ENCODE measurements at regions of chr7 and their contacts with region 1.

Region 1: GRCh38 chr7:105336009-105336408 is 52.7 kb downstream of the SRPK2 start:
- DNase-seq: no peak
- ATAC-seq: no peak
- H3K4me3 Mint-ChIP-seq: no peak overlapping the region
- H3K27ac Mint-ChIP-seq: no peak overlapping the region
- H3K4me1 Mint-ChIP-seq: peaks cover 28% of the 10 kb centered on the region
- H3K27me3 Mint-ChIP-seq: no peaks in the 10 kb centered on the region
- CTCF ChIP-seq: no peak

Region 2: GRCh38 chr7:105141068-105141467 is 194.9 kb before region 1 on chr7:
- CTCF ChIA-PET with region 1: interaction called, 4 read pairs
- POLR2A ChIA-PET with region 1: no interaction called
- intact Hi-C with region 1: loop called (anchors 5 kb)
- DNase-seq: no peak
- ATAC-seq: no peak
- H3K4me3 Mint-ChIP-seq: no peak overlapping the region
- H3K27ac Mint-ChIP-seq: no peak overlapping the region
- H3K4me1 Mint-ChIP-seq: no peaks in the 10 kb centered on the region
- H3K27me3 Mint-ChIP-seq: no peaks in the 10 kb centered on the region
- CTCF ChIP-seq: no peak

Region 3: GRCh38 chr7:105387621-105388372 is 51.8 kb after region 1 on chr7:
- CTCF ChIA-PET with region 1: no interaction called
- POLR2A ChIA-PET with region 1: no interaction called
- intact Hi-C with region 1: loop called (anchors 10 kb)
- DNase-seq: peak; percentile 48
- ATAC-seq: peak; percentile 51
- H3K4me3 Mint-ChIP-seq: peak overlapping the region; percentile 88
- H3K27ac Mint-ChIP-seq: peak overlapping the region; percentile 69
- H3K4me1 Mint-ChIP-seq: peaks cover 27% of the 10 kb centered on the region
- H3K27me3 Mint-ChIP-seq: no peaks in the 10 kb centered on the region
- CTCF ChIP-seq: no peak